ENCODE measurements at regions of chr2 and their contacts with region 1.

Region 1: DNA sequence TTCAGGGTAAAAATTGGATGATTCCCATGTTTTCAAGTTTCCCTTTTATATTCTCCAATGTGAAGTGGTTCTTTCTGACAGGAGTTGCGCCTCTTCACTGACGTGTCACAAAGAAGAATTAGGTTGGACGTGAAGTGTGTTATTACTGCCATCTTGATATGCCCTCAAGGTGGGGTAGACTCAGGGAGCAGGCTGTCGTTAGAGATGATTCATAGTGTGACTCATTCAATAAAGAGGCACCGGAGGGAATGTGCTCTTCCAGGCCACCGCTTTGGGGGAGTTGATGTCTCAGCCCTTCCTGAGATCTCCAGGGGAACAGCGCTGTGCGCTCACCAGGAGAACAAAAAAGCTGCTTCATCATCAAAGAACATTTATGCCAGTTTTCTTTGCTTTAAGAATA is 3.6 kb upstream of the DGKD start:
- DNase-seq: peak; percentile 93
- H3K4me3 ChIP-seq: no peak overlapping the region
- H3K27ac ChIP-seq: peak overlapping the region; percentile 21
- H3K4me1 ChIP-seq: peaks cover 22% of the 10 kb centered on the region
- H3K27me3 ChIP-seq: no peaks in the 10 kb centered on the region
- CTCF ChIP-seq: no peak

Region 2: DNA sequence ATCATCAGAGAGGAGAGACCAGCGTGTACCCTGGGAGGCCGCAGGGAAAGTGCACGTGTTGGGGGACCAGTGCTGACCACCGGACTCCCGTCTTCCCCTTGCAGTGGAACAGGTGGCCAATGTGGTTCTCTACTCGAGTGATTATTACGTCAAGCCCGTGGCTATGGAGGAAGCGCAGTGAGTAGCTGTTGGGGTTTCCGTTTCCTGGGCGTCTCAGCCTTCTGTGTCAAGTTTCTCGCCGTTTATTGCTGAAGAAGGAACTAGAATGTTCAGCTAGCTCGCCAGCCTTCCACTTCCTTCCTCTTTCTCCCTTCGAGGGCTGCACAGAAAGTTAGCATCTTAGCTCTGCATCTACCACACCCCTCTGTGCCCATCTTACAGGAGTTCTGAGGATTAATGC is 19.2 kb before region 1 on chr2:
- CTCF ChIA-PET with region 1: interaction called, 8 read pairs
- POLR2A ChIA-PET with region 1: no interaction called
- intact Hi-C with region 1: loop called (anchors 2 kb)
- DNase-seq: peak; percentile 45
- H3K4me3 ChIP-seq: no peak overlapping the region
- H3K27ac ChIP-seq: peak overlapping the region; percentile 79
- H3K4me1 ChIP-seq: peaks cover 37% of the 10 kb centered on the region
- H3K27me3 ChIP-seq: no peaks in the 10 kb centered on the region
- CTCF ChIP-seq: no peak

Region 3: DNA sequence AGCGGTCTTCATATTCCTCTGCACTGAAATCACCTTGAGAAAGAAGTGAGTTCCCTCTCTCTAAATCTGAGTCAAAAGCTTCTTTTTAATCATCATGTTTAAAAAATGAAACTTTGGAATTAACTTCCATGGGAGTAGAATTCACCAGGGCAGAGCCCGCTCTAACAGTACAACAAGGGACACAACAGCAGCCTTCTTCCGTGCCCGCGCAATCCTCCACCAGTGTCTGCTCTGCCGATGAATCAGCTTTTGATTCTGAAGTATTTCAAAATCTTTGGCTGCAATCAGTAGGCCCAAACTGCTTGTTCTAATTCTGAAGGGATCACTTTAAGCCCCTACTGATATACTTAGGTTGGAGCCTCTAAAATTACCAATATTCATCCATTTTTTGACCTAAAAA is 139.0 kb after region 1 on chr2:
- CTCF ChIA-PET with region 1: no interaction called
- POLR2A ChIA-PET with region 1: no interaction called
- intact Hi-C with region 1: no loop called
- DNase-seq: no peak
- H3K4me3 ChIP-seq: no peak overlapping the region
- H3K27ac ChIP-seq: no peak overlapping the region
- H3K4me1 ChIP-seq: no peaks in the 10 kb centered on the region
- H3K27me3 ChIP-seq: no peaks in the 10 kb centered on the region
- CTCF ChIP-seq: no peak